Naive thymus-derived CD4-positive, alpha-beta T cell (primary cell): ENCODE measurements at regions of chr9 and their contacts with region 1.

Region 1: DNA sequence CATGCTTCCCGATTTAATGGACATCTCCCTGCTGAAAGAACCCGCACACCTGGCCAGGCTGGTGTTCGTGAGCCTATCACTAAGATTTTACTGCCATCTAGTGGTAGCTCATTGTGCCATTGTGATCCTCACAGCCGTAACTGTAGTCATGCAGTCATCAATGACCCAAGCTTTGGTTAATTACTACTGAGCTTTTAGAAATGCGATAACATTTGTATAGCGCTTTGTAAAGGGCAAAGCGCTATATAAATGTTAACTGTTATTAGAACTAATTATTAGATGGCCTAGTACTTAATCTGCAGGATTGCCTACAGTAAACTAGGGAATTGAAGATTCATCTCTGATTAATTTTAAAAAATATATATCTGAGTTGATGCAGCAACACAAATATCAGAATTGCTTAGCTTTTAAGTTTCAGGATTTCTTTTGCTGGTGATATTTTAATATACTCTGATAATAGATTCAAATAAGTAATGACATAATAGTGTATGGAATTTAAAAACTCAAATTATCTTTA is 90.2 kb downstream of the HACD4 start:
- DNase-seq: peak; percentile 13 to 73 (median 62)
- ATAC-seq: peak; percentile 95
- H3K4me3 ChIP-seq: no peak overlapping the region
- H3K4me3 Mint-ChIP-seq: peak overlapping the region in 1 of 10 donors; percentile 20
- H3K27ac ChIP-seq: no peak overlapping the region
- H3K27ac Mint-ChIP-seq: peak overlapping the region in 3 of 9 donors; percentile 13 to 29 (median 29)
- H3K4me1 ChIP-seq: no peaks in the 10 kb centered on the region
- H3K4me1 Mint-ChIP-seq: peaks cover 0 to 8% (median 5%) of the 10 kb centered on the region in 7 donors
- H3K27me3 ChIP-seq: no peaks in the 10 kb centered on the region
- H3K27me3 Mint-ChIP-seq: no peaks in the 10 kb centered on the region

Region 2: GRCh38 chr9:19493174-19493811 is 1447.9 kb before region 1 on chr9:
- CTCF ChIA-PET with region 1: interaction called, 3 read pairs
- POLR2A ChIA-PET with region 1: no interaction called
- intact Hi-C with region 1: loop called (anchors 1 to 5 kb)
- DNase-seq: peak in 7 of 9 donors; percentile 10 to 51 (median 36)
- ATAC-seq: peak; percentile 77
- H3K4me3 ChIP-seq: peak overlapping the region; percentile 26
- H3K4me3 Mint-ChIP-seq: peak overlapping the region in 9 of 10 donors; percentile 8 to 54 (median 34)
- H3K27ac ChIP-seq: no peak overlapping the region
- H3K27ac Mint-ChIP-seq: no peak overlapping the region
- H3K4me1 ChIP-seq: no peaks in the 10 kb centered on the region
- H3K4me1 Mint-ChIP-seq: peaks cover 0 to 14% (median 11%) of the 10 kb centered on the region in 7 donors
- H3K27me3 ChIP-seq: peaks cover 0 to 4% of the 10 kb centered on the region in 2 donors
- H3K27me3 Mint-ChIP-seq: peaks cover 0 to 21% (median 10%) of the 10 kb centered on the region in 5 donors

Region 3: GRCh38 chr9:20043035-20043434 is 898.2 kb before region 1 on chr9:
- CTCF ChIA-PET with region 1: no interaction called
- POLR2A ChIA-PET with region 1: no interaction called
- intact Hi-C with region 1: loop called in 1 of 2 experiments (anchors 10 kb)
- DNase-seq: peak in 6 of 9 donors; percentile 6 to 46 (median 34)
- ATAC-seq: peak; percentile 59
- H3K4me3 ChIP-seq: peak overlapping the region; percentile 28
- H3K4me3 Mint-ChIP-seq: peak overlapping the region; percentile 61 to 85 (median 80)
- H3K27ac ChIP-seq: peak overlapping the region; percentile 17
- H3K27ac Mint-ChIP-seq: peak overlapping the region; percentile 84 to 95 (median 91)
- H3K4me1 ChIP-seq: peaks cover 0 to 12% of the 10 kb centered on the region in 2 donors
- H3K4me1 Mint-ChIP-seq: peaks cover 9 to 43% (median 27%) of the 10 kb centered on the region in 7 donors
- H3K27me3 ChIP-seq: no peaks in the 10 kb centered on the region
- H3K27me3 Mint-ChIP-seq: no peaks in the 10 kb centered on the region

Region 4: DNA sequence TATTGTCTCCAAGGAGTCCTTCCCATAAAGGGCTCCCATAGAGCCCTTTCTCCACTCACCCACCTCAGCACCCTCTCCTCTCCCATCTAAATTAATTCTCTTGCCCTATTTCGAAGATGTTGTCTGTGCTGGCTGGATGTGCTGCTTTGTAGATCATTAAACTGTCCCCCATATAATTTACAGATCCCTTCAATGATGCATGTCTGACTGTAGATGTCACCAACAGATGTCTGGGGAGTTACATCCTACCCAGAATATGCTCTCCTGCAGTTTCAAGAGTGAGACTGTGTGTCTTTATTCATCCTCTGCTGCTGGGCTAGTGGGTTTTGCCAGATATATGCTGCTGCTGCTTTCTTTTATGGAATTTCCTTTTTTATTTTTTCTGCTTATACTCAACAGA is 670.1 kb before region 1 on chr9:
- CTCF ChIA-PET with region 1: interaction called, 8 read pairs
- POLR2A ChIA-PET with region 1: no interaction called
- intact Hi-C with region 1: loop called in 1 of 2 experiments (anchors 1 kb)
- DNase-seq: peak in 5 of 9 donors; percentile 9 to 34 (median 25)
- ATAC-seq: no peak
- H3K4me3 ChIP-seq: no peak overlapping the region
- H3K4me3 Mint-ChIP-seq: no peak overlapping the region
- H3K27ac ChIP-seq: no peak overlapping the region
- H3K27ac Mint-ChIP-seq: peak overlapping the region in 5 of 9 donors; percentile 0 to 42 (median 12)
- H3K4me1 ChIP-seq: no peaks in the 10 kb centered on the region
- H3K4me1 Mint-ChIP-seq: peaks cover 7 to 35% (median 12%) of the 10 kb centered on the region in 7 donors
- H3K27me3 ChIP-seq: no peaks in the 10 kb centered on the region
- H3K27me3 Mint-ChIP-seq: no peaks in the 10 kb centered on the region

Region 5: DNA sequence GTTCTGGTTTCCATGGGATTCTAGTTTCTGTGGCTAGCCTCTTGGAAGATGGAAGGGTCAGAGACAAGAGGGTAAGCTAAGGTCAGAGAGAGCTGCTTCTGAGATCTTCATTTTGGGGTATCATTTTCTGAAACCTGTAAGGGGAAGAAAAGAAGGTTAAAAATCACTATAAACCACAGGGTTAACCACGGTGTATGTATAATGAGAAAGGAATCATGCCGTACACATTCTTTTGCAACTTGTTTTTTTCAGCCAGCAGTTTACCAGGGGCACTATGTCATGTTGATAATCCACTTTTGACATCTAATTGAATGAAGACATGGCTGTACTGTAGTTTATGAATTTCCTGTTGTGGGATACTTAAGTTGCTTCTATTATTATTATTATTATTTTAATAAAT is 92.7 kb before region 1 on chr9:
- CTCF ChIA-PET with region 1: no interaction called
- POLR2A ChIA-PET with region 1: no interaction called
- intact Hi-C with region 1: no loop called
- DNase-seq: no peak
- ATAC-seq: no peak
- H3K4me3 ChIP-seq: no peak overlapping the region
- H3K4me3 Mint-ChIP-seq: no peak overlapping the region
- H3K27ac ChIP-seq: no peak overlapping the region
- H3K27ac Mint-ChIP-seq: no peak overlapping the region
- H3K4me1 ChIP-seq: no peaks in the 10 kb centered on the region
- H3K4me1 Mint-ChIP-seq: peaks cover 0 to 3% (median 0%) of the 10 kb centered on the region in 7 donors
- H3K27me3 ChIP-seq: no peaks in the 10 kb centered on the region
- H3K27me3 Mint-ChIP-seq: no peaks in the 10 kb centered on the region

Region 6: GRCh38 chr9:20884985-20885593 is 56.1 kb before region 1 on chr9:
- CTCF ChIA-PET with region 1: interaction called, 4 read pairs
- POLR2A ChIA-PET with region 1: no interaction called
- intact Hi-C with region 1: loop called (anchors 1 to 2 kb)
- DNase-seq: peak in 8 of 9 donors; percentile 23 to 54 (median 43)
- ATAC-seq: peak; percentile 71
- H3K4me3 ChIP-seq: no peak overlapping the region
- H3K4me3 Mint-ChIP-seq: no peak overlapping the region
- H3K27ac ChIP-seq: no peak overlapping the region
- H3K27ac Mint-ChIP-seq: no peak overlapping the region
- H3K4me1 ChIP-seq: no peaks in the 10 kb centered on the region
- H3K4me1 Mint-ChIP-seq: no peaks in the 10 kb centered on the region
- H3K27me3 ChIP-seq: no peaks in the 10 kb centered on the region
- H3K27me3 Mint-ChIP-seq: no peaks in the 10 kb centered on the region